Head of caudate nucleus (tissue), 42 donors: ENCODE measurements at regions of chr9 and their contacts with region 1.

Region 1: DNA sequence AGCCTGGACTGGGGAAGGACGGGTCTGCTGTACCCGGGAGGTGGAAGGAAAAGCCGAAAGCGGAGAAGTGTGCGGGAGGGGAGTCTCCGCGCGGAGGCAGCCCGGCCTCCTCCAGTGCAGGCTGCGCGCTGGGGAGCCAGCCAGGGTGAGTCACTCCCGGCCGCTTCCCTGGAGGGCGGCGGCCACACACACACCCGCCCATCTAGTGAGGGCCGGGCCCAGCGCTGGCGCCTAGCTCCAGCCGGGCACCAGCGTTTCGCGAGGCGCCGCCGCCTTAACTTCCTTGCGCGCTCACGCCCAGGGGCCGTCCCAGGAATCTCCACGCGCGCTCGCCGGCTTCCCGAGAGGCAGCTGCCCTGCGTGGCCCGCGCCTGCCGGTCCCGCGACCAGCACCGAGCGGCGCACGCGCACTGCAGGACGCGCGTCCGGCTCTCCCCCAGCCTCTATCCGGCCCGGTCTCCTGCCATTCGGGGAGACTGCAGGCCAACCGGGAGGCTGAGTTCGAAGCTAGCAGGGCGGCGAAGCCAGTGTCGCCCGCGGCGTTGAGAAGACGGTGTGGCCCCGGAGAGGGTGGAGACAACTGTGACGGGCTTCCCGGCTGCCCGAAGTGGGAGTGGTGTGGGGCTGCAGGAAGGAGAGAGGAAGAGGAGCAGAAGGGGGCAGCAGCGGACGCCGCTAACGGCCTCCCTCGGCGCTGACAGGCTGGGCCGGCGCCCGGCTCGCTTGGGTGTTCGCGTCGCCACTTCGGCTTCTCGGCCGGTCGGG is at the start of gene JAK2:
- DNase-seq: peak; percentile 71 to 94 (median 88)

Region 2: GRCh38 chr9:4740638-4741364 is 244.0 kb before region 1 on chr9 and contains the start of gene AK3:
- intact Hi-C with region 1: loop called (anchors 5 kb)
- DNase-seq: peak; percentile 49 to 94 (median 84)

Region 3: GRCh38 chr9:4762108-4762885 is 222.5 kb before region 1 on chr9:
- intact Hi-C with region 1: loop called (anchors 5 kb)
- DNase-seq: peak; percentile 41 to 92 (median 78)

Region 4: GRCh38 chr9:4792572-4793458 is 192.0 kb before region 1 on chr9 and contains the start of gene RCL1:
- intact Hi-C with region 1: loop called (anchors 5 kb)
- DNase-seq: peak; percentile 90 to 99 (median 98)